H1 (cell line): ENCODE measurements at regions of chr20 and their contacts with region 1.

Region 1: DNA sequence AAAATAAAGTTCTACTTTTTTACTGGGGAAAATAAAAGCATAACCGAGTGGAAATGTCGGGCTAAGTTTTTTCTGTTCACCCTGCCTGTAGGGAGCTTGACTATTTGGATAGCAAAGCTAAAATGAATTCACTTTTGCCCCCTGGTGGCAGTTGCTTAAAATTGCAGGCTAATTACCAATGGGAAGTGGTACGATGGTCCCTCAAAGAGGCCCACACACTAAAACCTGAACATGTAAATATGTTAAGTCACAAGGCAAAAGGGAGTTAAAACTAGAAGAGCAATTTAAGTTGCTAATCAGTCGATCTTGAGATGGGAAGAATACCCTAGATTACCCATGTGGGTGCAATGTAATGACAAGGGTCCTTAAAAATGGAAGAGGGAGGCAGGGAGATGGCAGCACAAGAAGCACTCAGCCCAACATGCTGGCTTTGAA is 916 bp upstream of the SUN5 start:
- DNase-seq: no peak
- H3K4me3 ChIP-seq: no peak overlapping the region
- H3K27ac ChIP-seq: no peak overlapping the region
- H3K4me1 ChIP-seq: no peaks in the 10 kb centered on the region; a peak in 2 of 7 replicates
- H3K27me3 ChIP-seq: no peaks in the 10 kb centered on the region
- CTCF ChIP-seq: peak in 2 of 3 experiments; percentile 63 to 71; a peak in 3 of 4 replicates
- EP300 ChIP-seq: no peak
- POLR2A ChIP-seq: no peak
- RAD21 ChIP-seq: peak; percentile 60 to 64

Region 2: GRCh38 chr20:32902456-32903420 is 102.4 kb before region 1 on chr20:
- CTCF ChIA-PET with region 1: interaction called, 36 read pairs
- POLR2A ChIA-PET with region 1: no interaction called
- DNase-seq: peak in 1 of 2 experiments; percentile 72
- H3K4me3 ChIP-seq: no peak overlapping the region
- H3K27ac ChIP-seq: no peak overlapping the region
- H3K4me1 ChIP-seq: no peaks in the 10 kb centered on the region
- H3K27me3 ChIP-seq: no peaks in the 10 kb centered on the region
- CTCF ChIP-seq: peak; percentile 93 to 97 (median 95)
- EP300 ChIP-seq: no peak
- POLR2A ChIP-seq: no peak
- RAD21 ChIP-seq: peak; percentile 94 to 95

Region 3: GRCh38 chr20:32972181-32973076 is 32.7 kb before region 1 on chr20:
- CTCF ChIA-PET with region 1: interaction called, 11 read pairs
- POLR2A ChIA-PET with region 1: no interaction called
- DNase-seq: peak in 1 of 2 experiments; percentile 46
- H3K4me3 ChIP-seq: no peak overlapping the region; a peak in 1 of 8 replicates
- H3K27ac ChIP-seq: no peak overlapping the region
- H3K4me1 ChIP-seq: peaks cover 10 to 25% (median 16%) of the 10 kb centered on the region in 4 experiments
- H3K27me3 ChIP-seq: no peaks in the 10 kb centered on the region
- CTCF ChIP-seq: no peak
- EP300 ChIP-seq: no peak
- POLR2A ChIP-seq: no peak
- RAD21 ChIP-seq: no peak

Region 4: DNA sequence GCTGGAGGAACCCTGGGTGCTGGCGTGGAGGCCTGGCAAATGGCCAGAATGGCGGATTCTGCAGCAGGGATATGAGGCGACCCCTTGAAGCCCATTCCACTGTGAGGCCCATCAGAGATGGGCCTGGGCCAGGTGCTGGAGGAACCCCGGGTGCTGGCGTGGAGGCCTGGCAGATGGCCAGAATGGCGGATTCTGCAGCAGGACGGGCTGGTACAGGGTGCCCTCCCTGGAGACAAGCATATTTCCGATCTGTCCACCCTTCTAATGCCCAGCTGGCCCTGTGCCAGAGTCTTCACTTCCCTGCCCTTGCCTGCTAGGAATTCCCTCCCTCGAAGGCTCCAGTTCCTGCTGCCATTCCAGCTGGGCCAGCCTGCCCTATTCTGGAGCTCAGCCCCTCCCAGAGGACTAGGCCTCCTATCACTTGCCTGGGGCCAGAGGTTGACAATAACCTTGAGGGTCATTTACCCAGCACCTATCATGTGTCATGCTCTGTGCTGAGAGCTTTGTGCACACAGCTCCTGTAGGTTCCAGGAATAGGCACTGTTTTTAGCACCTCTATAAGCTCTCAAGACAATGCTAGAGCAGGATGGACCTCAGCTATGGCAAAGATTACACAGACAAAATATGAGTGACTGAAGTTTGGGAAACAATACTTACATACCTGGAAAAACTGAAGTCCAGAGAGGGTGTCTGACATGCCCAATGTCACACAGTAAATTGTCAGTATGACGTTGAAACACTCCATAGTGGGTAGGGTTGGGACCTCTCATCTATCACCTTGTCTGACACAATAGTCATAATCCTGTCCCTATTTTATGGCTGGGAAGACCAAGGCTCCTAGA is 22.3 kb before region 1 on chr20:
- CTCF ChIA-PET with region 1: interaction called, 23 read pairs
- POLR2A ChIA-PET with region 1: interaction called, 3 read pairs
- DNase-seq: no peak
- H3K4me3 ChIP-seq: no peak overlapping the region
- H3K27ac ChIP-seq: no peak overlapping the region
- H3K4me1 ChIP-seq: no peaks in the 10 kb centered on the region; a peak in 1 of 7 replicates
- H3K27me3 ChIP-seq: 0 out of 7 replicates have a peak, but pooled peaks cover 0 to under 1% (median 0%) of the 10 kb centered on the region in 4 experiments
- CTCF ChIP-seq: no peak
- EP300 ChIP-seq: no peak
- POLR2A ChIP-seq: no peak
- RAD21 ChIP-seq: no peak

Region 5: GRCh38 chr20:32988008-32988407 is 17.1 kb before region 1 on chr20:
- CTCF ChIA-PET with region 1: interaction called, 39 read pairs
- POLR2A ChIA-PET with region 1: interaction called, 3 read pairs
- DNase-seq: no peak
- H3K4me3 ChIP-seq: no peak overlapping the region
- H3K27ac ChIP-seq: no peak overlapping the region
- H3K4me1 ChIP-seq: no peaks in the 10 kb centered on the region; a peak in 1 of 7 replicates
- H3K27me3 ChIP-seq: no peaks in the 10 kb centered on the region
- CTCF ChIP-seq: no peak
- EP300 ChIP-seq: no peak
- POLR2A ChIP-seq: no peak
- RAD21 ChIP-seq: no peak